GM12878 (cell line): ENCODE measurements at regions of chr11 and their contacts with region 1.

Region 1: GRCh38 chr11:20501252-20501651 is 98.2 kb upstream of the SLC6A5 start:
- DNase-seq: no peak
- ATAC-seq: peak; percentile 72
- H3K4me3 ChIP-seq: no peak overlapping the region
- H3K27ac ChIP-seq: no peak overlapping the region; the same call in 1 of the 2 replicates
- H3K4me1 ChIP-seq: no peaks in the 10 kb centered on the region
- H3K27me3 ChIP-seq: no peaks in the 10 kb centered on the region
- CTCF ChIP-seq: no peak
- EP300 ChIP-seq: no peak
- POLR2A ChIP-seq: no peak
- RAD21 ChIP-seq: no peak

Region 2: DNA sequence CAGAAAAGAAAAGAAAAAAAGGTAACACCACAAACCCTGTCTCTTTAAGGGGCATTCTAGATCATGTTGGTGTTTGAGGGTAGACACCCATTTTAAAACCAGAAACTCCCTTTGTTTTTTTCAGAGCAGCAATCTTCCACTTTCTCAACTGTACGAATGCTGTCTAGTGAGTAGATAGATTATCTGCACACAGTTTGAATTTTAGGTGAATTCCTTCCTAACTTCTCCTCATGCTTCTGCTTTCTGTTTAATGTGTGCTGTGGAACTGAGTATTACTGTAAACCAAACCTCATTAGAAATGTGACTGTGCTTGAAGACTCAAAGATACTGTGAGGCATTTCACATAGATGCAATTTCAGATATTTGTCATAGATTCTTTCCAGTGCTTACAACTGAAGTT is 11.3 kb before region 1 on chr11:
- CTCF ChIA-PET with region 1: interaction called, 4 read pairs
- POLR2A ChIA-PET with region 1: no interaction called
- RAD21 ChIA-PET with region 1: interaction called, 6 read pairs
- SMC1A ChIA-PET with region 1: interaction called, 10 read pairs
- in situ Hi-C with region 1: no loop called
- intact Hi-C with region 1: no loop called
- DNase-seq: peak; percentile 53
- ATAC-seq: peak; percentile 98
- H3K4me3 ChIP-seq: no peak overlapping the region
- H3K27ac ChIP-seq: peak overlapping the region; percentile 43; the same call in 1 of the 2 replicates
- H3K4me1 ChIP-seq: no peaks in the 10 kb centered on the region
- H3K27me3 ChIP-seq: no peaks in the 10 kb centered on the region
- CTCF ChIP-seq: no peak
- EP300 ChIP-seq: no peak
- POLR2A ChIP-seq: no peak
- RAD21 ChIP-seq: no peak

Region 3: GRCh38 chr11:20511982-20512381 is 10.7 kb after region 1 on chr11:
- CTCF ChIA-PET with region 1: interaction called, 4 read pairs
- POLR2A ChIA-PET with region 1: no interaction called
- RAD21 ChIA-PET with region 1: interaction called, 7 read pairs
- SMC1A ChIA-PET with region 1: interaction called, 19 read pairs
- in situ Hi-C with region 1: no loop called
- intact Hi-C with region 1: no loop called
- DNase-seq: no peak
- ATAC-seq: peak; percentile 17; the same call in 1 of the 3 replicates
- H3K4me3 ChIP-seq: no peak overlapping the region
- H3K27ac ChIP-seq: no peak overlapping the region
- H3K4me1 ChIP-seq: no peaks in the 10 kb centered on the region
- H3K27me3 ChIP-seq: no peaks in the 10 kb centered on the region
- CTCF ChIP-seq: no peak
- EP300 ChIP-seq: no peak
- POLR2A ChIP-seq: no peak
- RAD21 ChIP-seq: no peak